ENCODE measurements at regions of chr13 and their contacts with region 1.

Region 1: DNA sequence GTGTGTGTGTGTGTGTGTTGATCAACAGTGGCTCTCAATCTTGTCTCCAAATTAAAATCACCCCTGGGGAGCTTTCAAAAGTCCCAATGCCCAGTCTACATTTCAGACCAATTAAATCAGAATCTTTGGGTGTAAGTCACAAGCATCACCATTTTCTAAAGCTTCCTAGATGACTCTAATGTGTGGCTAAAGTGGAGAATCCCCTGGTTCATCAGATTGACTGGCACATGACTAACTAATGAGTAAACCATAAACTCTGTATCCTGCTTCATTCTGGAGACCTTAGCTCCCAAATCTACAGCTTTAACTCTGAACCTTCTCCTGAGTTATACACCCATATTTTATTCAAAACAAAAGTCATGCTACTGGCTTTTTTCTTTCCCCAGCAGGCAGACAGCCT is 131.3 kb downstream of the SUCLA2 start:
- DNase-seq: no peak
- CTCF ChIP-seq: no peak

Region 2: DNA sequence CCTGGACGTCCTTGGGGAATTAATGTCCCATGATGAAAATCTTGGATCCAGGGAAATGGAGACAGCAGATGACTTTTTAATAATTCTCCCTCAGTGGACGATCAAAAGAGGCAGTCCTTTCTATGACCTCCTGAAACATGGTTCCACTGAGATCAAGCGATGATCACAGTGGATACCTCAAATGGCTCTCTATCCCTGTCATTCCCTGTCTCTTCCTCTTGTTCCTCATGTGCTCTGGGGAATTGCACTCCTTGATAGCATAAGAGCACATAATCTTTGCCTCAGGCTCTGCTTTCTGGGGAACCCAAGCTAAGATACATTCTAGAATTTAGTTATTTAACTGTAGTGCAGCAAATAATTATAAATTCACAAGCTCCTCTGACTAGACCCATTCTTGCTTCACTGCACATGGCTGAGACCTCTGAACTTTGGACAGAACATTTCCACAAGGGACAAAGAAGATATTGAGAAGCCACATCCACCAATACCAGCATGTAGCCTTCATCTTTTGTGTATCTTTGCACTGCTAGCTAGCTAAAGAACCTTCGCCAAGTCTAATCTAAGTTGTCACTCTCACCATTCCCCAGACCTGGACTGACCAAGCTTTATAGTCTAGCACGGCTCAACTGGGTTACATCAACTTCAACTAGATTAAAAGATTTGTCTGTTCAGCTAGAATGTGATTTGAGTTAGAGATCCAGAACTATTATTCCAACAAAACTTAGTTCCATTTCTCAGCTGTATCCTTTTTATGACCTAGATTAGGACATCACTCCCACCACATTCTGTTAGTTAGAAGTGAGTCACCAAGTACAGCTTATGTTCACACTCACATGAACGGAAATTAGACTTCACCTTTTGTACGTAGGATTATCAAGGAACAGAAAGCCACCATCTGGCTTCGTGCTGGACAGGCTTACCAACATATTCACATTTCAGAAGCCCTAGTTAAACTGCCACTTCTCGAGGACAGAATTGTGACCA is 11.4 kb before region 1 on chr13:
- CTCF ChIA-PET with region 1: interaction called, 14 read pairs
- POLR2A ChIA-PET with region 1: no interaction called
- DNase-seq: no peak
- CTCF ChIP-seq: no peak

Region 3: DNA sequence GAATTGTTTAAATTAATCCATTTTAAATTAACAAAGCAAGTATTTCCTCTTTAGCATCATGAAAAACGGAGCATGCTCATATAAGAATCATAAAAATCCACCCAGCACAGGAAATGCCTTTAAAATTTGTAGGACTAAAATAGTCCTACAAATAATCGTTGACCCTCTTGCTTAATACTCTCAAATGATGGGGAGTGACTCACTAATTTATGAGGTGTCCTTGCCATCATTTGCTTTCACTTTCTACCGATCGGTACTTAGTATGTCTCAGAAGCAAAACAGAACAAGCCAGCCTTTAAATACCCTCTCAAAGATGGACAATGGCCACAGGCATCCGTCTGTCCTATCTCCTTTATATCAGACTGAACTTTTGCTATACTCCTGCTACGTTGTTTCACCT is 34.1 kb after region 1 on chr13:
- CTCF ChIA-PET with region 1: no interaction called
- POLR2A ChIA-PET with region 1: no interaction called
- DNase-seq: no peak
- CTCF ChIP-seq: no peak